ENCODE measurements at regions of chr5 and their contacts with region 1.

Region 1: GRCh38 chr5:5795074-5795771 is 372.7 kb downstream of the ICE1 start:
- DNase-seq: peak; percentile 72
- ATAC-seq: peak; percentile 97

Region 2: GRCh38 chr5:5644249-5644648 is 151.0 kb before region 1 on chr5:
- intact Hi-C with region 1: loop called (anchors 5 kb)
- DNase-seq: no peak
- ATAC-seq: peak; percentile 30